Dorsolateral prefrontal cortex (tissue), 120 donors: ENCODE measurements at regions of chr9 and their contacts with region 1.

Region 1: DNA sequence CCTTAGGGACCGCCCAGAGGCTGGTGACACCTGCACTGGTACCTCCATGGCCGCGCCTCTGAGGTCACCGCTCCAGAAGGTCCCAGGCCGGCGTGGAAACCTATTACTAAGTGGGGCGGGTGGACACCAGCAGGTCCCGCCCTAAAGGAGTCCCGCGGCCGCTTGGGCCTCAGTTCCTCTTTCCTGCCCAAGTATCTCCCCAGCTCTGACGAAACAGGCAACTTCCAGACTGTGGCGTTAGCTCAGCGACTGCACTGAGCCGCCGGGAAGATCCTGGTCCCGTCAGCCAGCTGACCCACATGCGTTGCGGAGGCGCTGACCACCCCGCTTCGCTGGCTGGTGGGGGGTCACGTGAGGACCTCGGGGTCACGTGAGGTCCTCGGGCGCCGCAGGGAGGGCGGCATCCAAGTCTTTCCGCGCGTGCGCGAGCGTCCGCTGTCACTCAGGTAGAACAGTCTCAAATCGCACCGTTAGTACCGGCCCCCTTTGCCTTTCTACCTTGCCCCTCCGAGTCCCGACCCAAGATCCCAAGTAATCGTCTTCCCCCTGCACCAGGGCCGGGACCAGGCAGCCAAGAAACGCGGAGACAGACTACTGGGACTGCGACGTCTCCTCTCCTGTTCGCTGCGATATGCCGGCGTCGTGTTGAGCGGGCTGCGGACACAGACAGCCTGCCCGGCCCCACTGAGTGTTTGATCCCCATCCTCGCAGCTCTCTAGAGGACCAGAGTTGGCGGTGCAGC is 53.7 kb upstream of the KDM4C start:
- DNase-seq: peak in 9 of 10 donors; percentile 71 to 92 (median 89)
- H3K4me3 ChIP-seq: peak overlapping the region in 57 of 59 donors; percentile 44 to 95 (median 77)
- H3K27ac ChIP-seq: peak overlapping the region in 57 of 59 donors; percentile 42 to 95 (median 86)
- H3K27me3 ChIP-seq: no peaks in the 10 kb centered on the region
- CTCF ChIP-seq: peak in 15 of 56 donors; percentile 12 to 49 (median 26)

Region 2: DNA sequence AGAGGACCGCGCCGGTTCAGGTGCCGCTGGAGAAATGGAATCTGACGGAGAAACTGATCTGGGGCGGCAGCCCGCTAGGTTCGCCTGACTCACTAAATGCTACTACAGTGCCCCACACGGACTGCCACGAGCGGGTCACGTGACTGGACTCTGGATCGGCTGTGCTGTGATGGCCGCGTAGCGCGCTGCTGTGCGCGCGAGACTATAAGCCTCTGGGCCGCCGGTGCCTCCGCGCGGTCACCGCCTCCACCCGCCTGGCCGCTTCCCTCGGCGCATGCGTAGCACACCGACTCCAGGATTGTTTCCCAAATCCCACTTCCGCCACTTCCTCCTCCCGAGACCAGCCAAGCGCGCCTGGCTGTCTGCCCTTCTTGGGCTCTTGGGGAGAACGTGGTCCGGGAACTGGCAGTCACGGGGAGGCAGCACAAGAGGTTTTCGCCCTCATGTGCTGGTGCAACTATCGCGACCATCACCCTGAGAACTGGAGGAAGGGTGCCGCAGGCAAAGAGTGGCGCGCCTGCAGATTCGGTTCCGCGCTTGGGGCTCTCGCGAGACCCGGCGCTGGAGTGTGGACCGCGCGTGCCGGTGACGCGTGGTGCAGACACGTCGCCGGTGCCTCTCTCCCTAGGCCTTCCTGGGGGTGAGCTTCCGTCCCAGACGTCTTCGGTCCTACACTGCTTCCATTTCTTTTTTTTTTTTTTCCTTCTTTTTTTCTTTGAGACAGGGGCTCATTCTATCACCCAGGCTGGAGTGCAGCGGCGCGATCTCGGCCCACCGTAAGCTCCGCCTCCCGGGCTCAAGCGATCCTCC is 22.7 kb before region 1 on chr9:
- intact Hi-C with region 1: loop called in 1 of 2 experiments (anchors 1 kb)
- DNase-seq: peak; percentile 93 to 98 (median 95)
- H3K4me3 ChIP-seq: peak overlapping the region; percentile 51 to 95 (median 80)
- H3K27ac ChIP-seq: peak overlapping the region; percentile 92 to 100 (median 99)
- H3K27me3 ChIP-seq: no peaks in the 10 kb centered on the region
- CTCF ChIP-seq: peak in 35 of 56 donors; percentile 4 to 52 (median 22)